ENCODE measurements at regions of chr1 and their contacts with region 1.

Region 1: GRCh38 chr1:116987256-116987555 is 14.4 kb upstream of the CD101 start:
- DNase-seq: peak in 2 of 5 donors; percentile 42 to 74
- ATAC-seq: no peak
- H3K4me3 ChIP-seq: peak overlapping the region in 1 of 12 donors; percentile 19
- H3K27ac ChIP-seq: peak overlapping the region in 2 of 12 donors; percentile 32 to 67
- H3K4me1 ChIP-seq: peaks cover 0 to 73% (median 29%) of the 10 kb centered on the region in 12 donors
- H3K27me3 ChIP-seq: no peaks in the 10 kb centered on the region
- CTCF ChIP-seq: no peak
- POLR2A ChIP-seq: no peak

Region 2: DNA sequence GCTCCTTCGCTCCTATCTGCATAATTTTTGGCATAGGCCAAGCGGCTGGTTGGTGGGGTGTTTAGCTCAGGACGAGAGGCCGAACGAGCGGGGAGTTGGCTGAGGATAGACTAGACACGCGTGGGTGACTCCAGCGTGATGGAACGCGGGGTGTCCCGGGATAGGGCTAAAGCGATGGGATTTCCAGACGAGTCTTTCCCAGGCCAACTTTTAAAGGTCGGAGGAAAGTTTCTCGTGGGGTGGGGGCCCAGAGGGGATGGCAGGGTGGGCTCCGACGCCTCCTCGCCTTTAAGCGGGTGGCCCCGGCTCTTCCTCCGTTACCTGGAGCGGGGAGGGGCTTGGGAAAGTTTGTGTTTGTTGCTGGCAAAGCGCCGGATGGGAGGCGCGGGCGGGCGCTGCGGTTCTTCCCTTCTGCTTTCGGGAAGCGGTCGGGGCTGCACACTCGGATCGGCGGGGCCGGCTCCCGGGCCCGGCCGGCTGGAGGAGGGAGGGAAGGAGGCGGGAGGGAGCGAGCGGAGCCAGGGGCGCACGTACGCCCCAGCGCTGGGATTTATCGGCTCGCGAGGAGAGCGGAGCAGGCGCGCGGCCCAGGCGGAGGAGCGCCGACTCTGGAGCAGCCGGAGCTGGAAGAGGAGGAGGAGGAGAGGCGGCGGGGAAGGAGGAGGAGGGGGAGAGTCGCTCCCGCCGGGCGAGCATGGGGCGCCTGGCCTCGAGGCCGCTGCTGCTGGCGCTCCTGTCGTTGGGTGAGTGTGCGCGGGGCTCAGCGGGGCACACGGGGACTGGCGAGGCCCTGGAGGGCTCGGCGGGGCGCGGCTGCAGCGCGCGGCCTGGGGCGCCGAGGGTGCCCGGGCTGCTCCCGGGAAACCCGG is 77.5 kb before region 1 on chr1 and contains the start of gene PTGFRN:
- intact Hi-C with region 1: loop called in 2 of 10 experiments (anchors 5 to 10 kb)
- DNase-seq: peak; percentile 73 to 87 (median 83)
- ATAC-seq: peak; percentile 47 to 77 (median 72)
- H3K4me3 ChIP-seq: peak within 1 kb of the TSS; percentile 57 to 91 (median 78)
- H3K27ac ChIP-seq: peak within 1 kb of the TSS; percentile 51 to 96 (median 91)
- H3K4me1 ChIP-seq: peaks cover 0 to 43% (median 23%) of the 10 kb centered on the region in 12 donors
- H3K27me3 ChIP-seq: peaks cover 0 to 17% (median 0%) of the 10 kb centered on the region in 9 donors
- CTCF ChIP-seq: no peak
- POLR2A ChIP-seq: peak in 1 of 2 donors; percentile 21
- total RNA-seq, gene PTGFRN: 59.3 to 231 (median 137) TPM

Region 3: DNA sequence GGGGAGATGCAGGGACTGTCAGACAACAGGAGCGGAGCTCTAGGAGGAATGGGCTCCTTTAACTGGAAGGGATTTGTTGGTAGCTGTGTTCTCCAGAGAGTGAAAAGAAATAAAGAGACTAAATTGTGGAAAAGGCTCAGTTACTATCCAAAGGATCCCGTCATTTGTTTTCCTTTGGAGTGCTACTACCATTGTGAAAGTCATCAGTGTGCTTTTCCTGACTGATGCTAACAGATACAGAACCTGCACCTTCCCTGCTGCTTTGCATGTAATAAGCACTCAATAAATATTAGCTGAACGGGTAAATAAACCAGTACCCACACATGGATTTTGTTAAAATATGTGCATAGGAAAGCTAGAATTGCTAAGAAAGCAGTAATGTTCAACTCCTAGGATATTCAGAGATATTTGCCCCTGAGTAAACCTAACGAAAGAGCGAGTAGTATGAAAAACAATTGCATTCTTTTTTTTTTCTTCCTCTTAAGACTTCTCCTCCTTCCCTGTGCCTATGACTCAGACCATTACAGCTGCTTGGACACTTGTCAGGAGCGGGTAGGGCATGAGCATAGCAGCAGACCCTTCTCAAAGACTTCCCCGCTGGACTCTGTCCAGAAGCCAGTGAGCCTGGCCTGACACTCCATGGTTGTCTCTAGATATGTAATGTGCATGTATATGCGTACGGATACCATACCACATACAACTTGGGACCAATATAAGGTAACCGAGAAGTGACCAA is 35.8 kb before region 1 on chr1:
- intact Hi-C with region 1: loop called in 1 of 10 experiments (anchors 2 kb)
- DNase-seq: peak in 2 of 5 donors; percentile 61 to 69
- ATAC-seq: peak; percentile 9 to 58 (median 32)
- H3K4me3 ChIP-seq: peak overlapping the region in 7 of 12 donors; percentile 1 to 39 (median 23)
- H3K27ac ChIP-seq: peak overlapping the region; percentile 30 to 88 (median 72)
- H3K4me1 ChIP-seq: peaks cover 0 to 71% (median 40%) of the 10 kb centered on the region in 12 donors
- H3K27me3 ChIP-seq: no peaks in the 10 kb centered on the region
- CTCF ChIP-seq: no peak
- POLR2A ChIP-seq: no peak

Region 4: DNA sequence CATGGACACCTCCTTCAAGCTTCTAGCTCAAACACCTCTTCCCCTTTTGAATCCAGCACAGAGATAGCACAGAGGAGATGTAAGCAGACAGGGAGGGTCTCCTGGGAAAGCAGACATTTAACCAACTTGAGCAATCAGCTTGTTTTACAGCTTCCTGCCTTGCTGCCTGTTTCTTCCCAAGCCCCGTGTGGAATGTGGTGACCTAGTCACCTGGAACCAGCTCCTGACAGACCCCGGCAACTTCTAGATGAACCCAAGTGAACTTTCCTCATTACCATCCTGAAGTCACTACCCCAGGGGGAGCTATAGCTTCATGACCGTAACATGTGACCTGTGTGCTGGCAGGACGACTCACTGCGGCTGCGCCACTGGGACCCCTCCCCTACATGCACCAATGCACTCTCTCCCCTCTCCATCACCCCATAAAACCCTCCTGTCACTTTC is 48.8 kb after region 1 on chr1:
- intact Hi-C with region 1: loop called in 1 of 10 experiments (anchors 10 kb)
- DNase-seq: no peak
- ATAC-seq: no peak
- H3K4me3 ChIP-seq: no peak overlapping the region
- H3K27ac ChIP-seq: no peak overlapping the region
- H3K4me1 ChIP-seq: peaks cover 0 to 5% (median 0%) of the 10 kb centered on the region in 12 donors
- H3K27me3 ChIP-seq: no peaks in the 10 kb centered on the region
- CTCF ChIP-seq: no peak
- POLR2A ChIP-seq: no peak

Measured in heart left ventricle (tissue), 16 donors.